Ascending aorta (tissue), 2 donors: ENCODE measurements at regions of chr10 and their contacts with region 1.

Region 1: GRCh38 chr10:43648398-43649184 is at the start of gene ZNF32:
- DNase-seq: peak; percentile 32 to 90
- H3K4me3 ChIP-seq: peak within 1 kb of the TSS; percentile 85 to 95
- H3K27ac ChIP-seq: peak within 1 kb of the TSS; percentile 73 to 78
- H3K4me1 ChIP-seq: peaks cover 0 to 5% of the 10 kb centered on the region in 2 donors
- H3K27me3 ChIP-seq: no peaks in the 10 kb centered on the region
- CTCF ChIP-seq: no peak
- total RNA-seq, gene ZNF32: 10.9 TPM

Region 2: GRCh38 chr10:43160046-43160918 is 488.3 kb before region 1 on chr10:
- intact Hi-C with region 1: no loop called
- DNase-seq: no peak
- H3K4me3 ChIP-seq: no peak overlapping the region
- H3K27ac ChIP-seq: peak overlapping the region in 1 of 2 donors; percentile 42
- H3K4me1 ChIP-seq: peaks cover 3 to 6% of the 10 kb centered on the region in 2 donors
- H3K27me3 ChIP-seq: no peaks in the 10 kb centered on the region
- CTCF ChIP-seq: no peak

Region 3: GRCh38 chr10:43606322-43607198 is 42.0 kb before region 1 on chr10 and contains the start of gene ZNF485:
- intact Hi-C with region 1: loop called (anchors 2 kb)
- DNase-seq: peak in 1 of 2 donors; percentile 79
- H3K4me3 ChIP-seq: peak within 1 kb of the TSS; percentile 72 to 97
- H3K27ac ChIP-seq: peak within 1 kb of the TSS; percentile 41 to 54
- H3K4me1 ChIP-seq: peaks cover 0 to 10% of the 10 kb centered on the region in 2 donors
- H3K27me3 ChIP-seq: no peaks in the 10 kb centered on the region
- CTCF ChIP-seq: peak in 1 of 3 experiments; percentile 2
- total RNA-seq, gene ZNF485: 0.43 TPM

Region 4: DNA sequence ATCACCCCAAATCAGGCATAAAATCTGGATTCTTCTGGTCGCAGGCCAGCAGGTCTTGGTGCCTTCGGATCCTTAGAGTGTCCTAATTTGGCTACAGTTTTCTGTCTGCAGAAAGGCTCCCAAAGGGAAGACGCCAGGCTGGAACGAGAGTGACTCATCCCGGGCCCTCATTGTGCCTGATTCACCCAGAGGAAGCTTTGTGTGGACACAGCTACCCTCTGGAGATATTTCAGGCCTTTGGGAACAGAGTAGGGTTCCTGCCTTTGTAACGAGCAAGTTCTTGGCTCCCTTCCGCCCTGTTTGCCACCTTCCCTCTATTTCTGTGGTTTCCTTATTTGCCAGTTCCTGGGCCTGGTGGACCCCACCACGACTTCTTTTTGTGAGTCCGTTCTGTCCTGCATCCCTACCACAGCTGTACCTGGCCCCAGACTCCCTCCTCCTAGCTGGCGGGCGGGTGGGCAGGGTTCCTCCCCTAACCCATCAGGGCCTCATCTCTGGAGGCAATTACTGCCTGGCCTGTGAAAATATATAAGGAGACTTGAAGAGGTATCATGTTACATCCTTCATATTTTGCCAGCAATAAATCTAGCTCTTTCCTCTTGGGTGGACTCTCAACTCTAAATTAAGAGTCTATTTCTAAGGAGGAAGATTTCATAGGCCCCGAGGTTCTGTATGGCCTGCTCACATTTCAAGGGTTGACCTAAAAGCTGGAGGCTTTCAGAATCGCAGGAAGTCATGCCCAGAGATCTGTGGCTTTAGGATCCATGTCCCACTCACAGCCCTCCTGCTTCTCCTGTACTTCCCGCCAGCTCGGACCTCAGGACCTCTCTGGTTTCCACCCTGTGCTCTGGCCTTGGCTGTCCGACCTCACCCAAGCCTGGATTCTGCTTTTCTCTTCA is 219.3 kb after region 1 on chr10:
- intact Hi-C with region 1: no loop called
- DNase-seq: no peak
- H3K4me3 ChIP-seq: no peak overlapping the region
- H3K27ac ChIP-seq: peak overlapping the region; percentile 41 to 48
- H3K4me1 ChIP-seq: peaks cover 0 to 16% of the 10 kb centered on the region in 2 donors
- H3K27me3 ChIP-seq: no peaks in the 10 kb centered on the region
- CTCF ChIP-seq: no peak